A673 (cell line): ENCODE measurements at regions of chrX and their contacts with region 1.

Region 1: GRCh38 chrX:30302957-30303356 is 6.2 kb downstream of the NR0B1 start:
- DNase-seq: peak; percentile 79
- H3K4me3 ChIP-seq: no peak overlapping the region
- H3K27ac ChIP-seq: peak overlapping the region; percentile 56
- H3K4me1 ChIP-seq: peaks cover 39% of the 10 kb centered on the region
- H3K27me3 ChIP-seq: no peaks in the 10 kb centered on the region
- CTCF ChIP-seq: no peak

Region 2: DNA sequence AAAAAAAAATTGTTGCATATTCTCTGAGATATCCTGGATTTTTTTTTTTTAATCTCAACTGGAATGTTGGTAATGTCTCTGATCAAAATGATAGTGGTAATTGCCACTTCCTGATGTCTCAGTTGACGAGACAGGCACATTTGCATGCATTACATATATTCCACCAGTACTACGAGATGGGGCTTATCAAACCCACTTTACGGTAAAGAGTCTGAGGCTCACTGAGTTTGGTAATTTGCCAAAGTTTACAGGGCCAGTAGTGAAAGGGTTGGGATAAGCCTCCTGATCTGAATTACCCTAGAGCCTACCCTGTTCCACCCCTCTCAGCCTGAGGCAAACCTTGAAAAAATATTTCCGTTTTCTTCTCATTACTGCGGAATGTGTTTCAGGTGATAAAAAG is 82.3 kb before region 1 on chrX:
- CTCF ChIA-PET with region 1: no interaction called
- POLR2A ChIA-PET with region 1: no interaction called
- intact Hi-C with region 1: loop called (anchors 2 kb)
- DNase-seq: peak; percentile 87
- H3K4me3 ChIP-seq: no peak overlapping the region
- H3K27ac ChIP-seq: no peak overlapping the region
- H3K4me1 ChIP-seq: peaks cover 3% of the 10 kb centered on the region
- H3K27me3 ChIP-seq: no peaks in the 10 kb centered on the region
- CTCF ChIP-seq: no peak